Motor neuron (in vitro differentiated cells): ENCODE measurements at regions of chr1 and their contacts with region 1.

Region 1: DNA sequence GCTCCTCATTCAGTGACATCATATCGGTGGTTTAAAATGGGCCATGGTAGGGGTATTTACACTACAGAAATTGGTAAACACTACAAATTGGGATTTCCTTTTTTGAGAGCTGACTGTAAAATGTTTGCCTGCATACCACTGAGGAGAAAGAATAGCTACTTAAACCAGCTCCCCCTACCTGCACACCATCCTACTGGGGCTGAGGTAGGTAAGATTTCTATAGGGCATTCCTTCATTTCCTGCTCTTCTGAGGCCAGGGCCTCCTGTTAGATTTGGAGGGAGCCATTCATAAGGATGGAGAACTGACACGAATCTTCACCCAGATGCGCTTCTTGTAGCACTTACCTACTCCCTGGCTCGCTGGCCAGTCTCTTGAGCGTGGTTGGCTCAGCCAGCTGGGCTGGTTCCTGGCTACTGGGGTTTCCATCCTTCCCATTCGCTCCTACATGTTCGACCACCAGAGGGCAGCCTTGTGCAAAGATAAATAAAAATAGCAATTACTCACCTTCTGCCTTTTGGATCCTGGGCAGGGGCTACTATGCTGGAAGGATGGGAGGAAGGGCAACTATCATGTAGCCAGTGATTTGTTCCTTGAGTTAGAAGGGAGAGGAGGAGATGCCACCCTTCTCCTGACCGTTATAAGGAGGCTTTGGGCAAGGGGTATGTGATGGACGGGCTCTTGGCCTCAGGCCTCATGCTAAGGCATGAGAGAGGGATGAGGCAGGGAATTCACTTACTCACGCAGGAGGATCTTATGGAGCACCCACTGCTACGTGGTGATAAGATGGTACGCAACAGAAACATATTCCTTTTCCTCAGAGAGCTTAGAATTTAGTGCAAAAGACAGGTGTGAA is 10.7 kb downstream of the OPTC start:
- ATAC-seq: peak; percentile 56 to 93 (median 72)
- H3K4me3 ChIP-seq: no peak overlapping the region
- H3K27ac ChIP-seq: no peak overlapping the region
- H3K4me1 ChIP-seq: peaks cover 32 to 42% of the 10 kb centered on the region in 2 donors

Region 2: GRCh38 chr1:203084588-203085502 is 419.8 kb before region 1 on chr1:
- in situ Hi-C with region 1: no loop called
- ATAC-seq: no peak
- H3K4me3 ChIP-seq: no peak overlapping the region
- H3K27ac ChIP-seq: no peak overlapping the region
- H3K4me1 ChIP-seq: peaks cover 23 to 31% of the 10 kb centered on the region in 2 donors

Region 3: GRCh38 chr1:203649999-203650855 is 145.6 kb after region 1 on chr1:
- in situ Hi-C with region 1: loop called in 1 of 9 experiments (anchors 25 kb)
- ATAC-seq: peak; percentile 86 to 98 (median 88)
- H3K4me3 ChIP-seq: peak overlapping the region; percentile 9 to 34 (median 24)
- H3K27ac ChIP-seq: peak overlapping the region; percentile 78 to 82
- H3K4me1 ChIP-seq: peaks cover 9 to 19% of the 10 kb centered on the region in 2 donors

Region 4: GRCh38 chr1:203692565-203693470 is 188.2 kb after region 1 on chr1:
- in situ Hi-C with region 1: loop called in 3 of 9 experiments (anchors 5 to 25 kb)
- ATAC-seq: peak; percentile 80 to 92 (median 86)
- H3K4me3 ChIP-seq: no peak overlapping the region
- H3K27ac ChIP-seq: no peak overlapping the region
- H3K4me1 ChIP-seq: peaks cover 0 to 6% of the 10 kb centered on the region in 2 donors

Region 5: GRCh38 chr1:204041803-204042505 is 537.3 kb after region 1 on chr1:
- in situ Hi-C with region 1: no loop called
- ATAC-seq: peak in 6 of 8 experiments; percentile 21 to 59 (median 26)
- H3K4me3 ChIP-seq: no peak overlapping the region
- H3K27ac ChIP-seq: peak overlapping the region in 1 of 2 donors; percentile 55
- H3K4me1 ChIP-seq: peaks cover 9 to 13% of the 10 kb centered on the region in 2 donors